ENCODE measurements at regions of chr3 and their contacts with region 1.

Region 1: DNA sequence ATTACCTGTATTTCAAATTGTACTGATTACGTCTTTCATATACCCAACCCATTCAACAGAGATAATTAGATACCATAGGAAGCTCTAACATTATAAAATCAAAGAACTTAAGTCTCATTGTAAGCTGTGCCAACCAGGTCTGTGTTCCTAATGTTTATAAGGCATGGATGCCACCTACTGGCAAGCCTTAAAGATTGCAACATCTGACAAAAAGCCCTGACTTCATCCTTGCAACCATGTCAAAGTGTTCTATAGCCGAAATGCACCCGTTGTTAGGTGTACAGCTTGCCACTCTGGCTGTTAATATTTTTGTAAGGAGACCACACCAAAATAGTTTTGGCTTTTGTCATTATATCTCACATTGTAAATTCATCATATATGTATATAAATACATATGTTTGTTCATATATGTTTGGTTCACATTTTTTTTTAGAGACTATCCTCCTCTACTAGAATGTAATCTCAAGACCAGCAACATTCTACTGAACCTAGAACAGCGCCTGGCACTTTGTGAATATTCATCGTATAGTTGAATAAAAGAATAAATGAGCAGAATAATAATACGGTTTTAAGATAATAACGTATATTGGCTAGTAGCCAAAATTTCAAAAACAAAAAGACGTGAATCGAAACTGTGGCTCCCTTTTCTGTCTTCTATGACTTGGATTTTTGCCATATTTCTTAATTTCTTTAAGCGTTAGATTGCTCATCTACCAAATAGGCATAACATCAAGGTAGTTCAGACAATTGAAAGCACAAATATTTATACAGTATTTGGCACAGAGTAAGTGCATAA is 258.1 kb downstream of the TBL1XR1 start:
- DNase-seq: peak; percentile 82
- H3K4me3 Mint-ChIP-seq: no peak overlapping the region
- H3K27ac Mint-ChIP-seq: no peak overlapping the region
- H3K4me1 Mint-ChIP-seq: no peaks in the 10 kb centered on the region
- H3K27me3 Mint-ChIP-seq: no peaks in the 10 kb centered on the region
- CTCF ChIP-seq: peak; percentile 95

Region 2: GRCh38 chr3:176514297-176514696 is 424.9 kb before region 1 on chr3:
- CTCF ChIA-PET with region 1: no interaction called
- intact Hi-C with region 1: loop called (anchors 2 kb)
- DNase-seq: peak; percentile 37
- H3K4me3 Mint-ChIP-seq: no peak overlapping the region
- H3K27ac Mint-ChIP-seq: no peak overlapping the region
- H3K4me1 Mint-ChIP-seq: no peaks in the 10 kb centered on the region
- H3K27me3 Mint-ChIP-seq: no peaks in the 10 kb centered on the region
- CTCF ChIP-seq: peak; percentile 58

Region 3: GRCh38 chr3:176692966-176693785 is 246.0 kb before region 1 on chr3:
- CTCF ChIA-PET with region 1: no interaction called
- intact Hi-C with region 1: loop called (anchors 5 kb)
- DNase-seq: no peak
- H3K4me3 Mint-ChIP-seq: no peak overlapping the region
- H3K27ac Mint-ChIP-seq: no peak overlapping the region
- H3K4me1 Mint-ChIP-seq: peaks cover 9% of the 10 kb centered on the region
- H3K27me3 Mint-ChIP-seq: no peaks in the 10 kb centered on the region
- CTCF ChIP-seq: no peak

Region 4: GRCh38 chr3:176872771-176873209 is 66.4 kb before region 1 on chr3:
- CTCF ChIA-PET with region 1: interaction called, 38 read pairs
- intact Hi-C with region 1: loop called (anchors 1 kb)
- DNase-seq: peak; percentile 73
- H3K4me3 Mint-ChIP-seq: no peak overlapping the region
- H3K27ac Mint-ChIP-seq: no peak overlapping the region
- H3K4me1 Mint-ChIP-seq: peaks cover 17% of the 10 kb centered on the region
- H3K27me3 Mint-ChIP-seq: no peaks in the 10 kb centered on the region
- CTCF ChIP-seq: peak; percentile 94

Region 5: GRCh38 chr3:177713928-177714900 is 775.0 kb after region 1 on chr3:
- CTCF ChIA-PET with region 1: no interaction called
- intact Hi-C with region 1: no loop called
- DNase-seq: no peak
- H3K4me3 Mint-ChIP-seq: no peak overlapping the region
- H3K27ac Mint-ChIP-seq: no peak overlapping the region
- H3K4me1 Mint-ChIP-seq: peaks cover 8% of the 10 kb centered on the region
- H3K27me3 Mint-ChIP-seq: no peaks in the 10 kb centered on the region
- CTCF ChIP-seq: no peak